ENCODE measurements at regions of chr11 and their contacts with region 1.

Region 1: DNA sequence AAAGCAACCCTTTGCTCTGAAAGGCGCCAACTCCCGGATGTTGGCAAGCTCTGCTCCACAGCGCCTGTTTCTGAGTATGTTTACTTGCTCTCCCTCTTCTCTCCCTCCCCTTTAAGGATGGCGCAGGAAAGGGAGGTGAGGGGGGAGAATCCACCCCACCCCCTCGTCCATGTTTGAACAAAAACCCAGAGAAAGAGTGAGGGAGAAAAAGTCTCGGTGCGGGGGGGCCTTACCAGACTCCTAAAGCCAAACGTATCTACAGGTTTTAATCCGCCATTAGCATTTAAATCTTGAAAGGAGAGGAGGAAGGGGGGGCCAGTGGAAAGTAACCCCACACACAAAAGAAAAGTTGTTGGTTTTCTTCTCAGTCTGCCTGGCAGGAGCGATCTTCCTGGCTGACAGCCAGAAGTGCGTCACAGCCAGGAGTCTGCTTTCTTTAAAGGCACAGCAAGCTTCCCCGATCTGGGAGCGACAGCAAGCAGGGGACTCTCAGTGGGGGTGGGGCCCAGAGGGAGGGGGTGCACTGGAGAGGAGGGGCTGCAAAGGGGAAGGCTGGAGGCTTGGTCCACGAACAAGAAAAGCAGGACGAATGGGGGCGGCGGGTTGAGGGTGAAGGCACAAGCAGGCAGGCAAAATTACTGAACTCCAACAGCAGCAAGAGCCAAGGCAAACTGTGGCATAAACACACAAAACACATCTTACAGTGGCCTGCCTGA is 39.5 kb downstream of the NUMA1 start:
- DNase-seq: peak; percentile 97
- H3K4me3 ChIP-seq: peak overlapping the region; percentile 13 to 51 (median 39)
- H3K27ac ChIP-seq: peak overlapping the region; percentile 92 to 100 (median 95)
- H3K4me1 ChIP-seq: peaks cover 48 to 55% of the 10 kb centered on the region in 2 donors
- H3K27me3 ChIP-seq: no peaks in the 10 kb centered on the region
- CTCF ChIP-seq: no peak
- POLR2A ChIP-seq: peak; percentile 23 to 64

Region 2: DNA sequence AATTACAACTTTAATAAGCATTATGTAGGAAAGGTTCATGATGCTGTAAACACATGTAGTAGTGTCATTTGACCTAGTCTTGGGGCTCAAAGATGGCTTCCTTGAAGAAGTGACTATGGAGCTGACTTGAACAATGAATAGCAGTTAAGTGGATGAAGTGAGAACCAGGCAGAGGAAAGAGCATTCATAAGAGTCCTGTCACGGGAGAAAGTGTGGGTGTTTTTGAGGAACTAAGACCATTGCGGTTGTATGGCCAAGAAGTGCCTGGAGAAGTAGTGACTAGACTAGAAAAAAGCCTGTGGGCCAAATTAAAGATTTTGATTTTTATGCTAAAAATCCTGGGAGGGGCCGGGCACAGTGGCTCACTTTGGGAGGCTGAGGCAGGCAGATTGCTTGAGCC is 49.4 kb before region 1 on chr11:
- intact Hi-C with region 1: no loop called
- DNase-seq: no peak
- H3K4me3 ChIP-seq: no peak overlapping the region
- H3K27ac ChIP-seq: no peak overlapping the region
- H3K4me1 ChIP-seq: peaks cover 10 to 14% of the 10 kb centered on the region in 2 donors
- H3K27me3 ChIP-seq: no peaks in the 10 kb centered on the region
- CTCF ChIP-seq: no peak
- POLR2A ChIP-seq: no peak

Region 3: GRCh38 chr11:72079827-72080255 is 39.0 kb after region 1 on chr11:
- intact Hi-C with region 1: loop called (anchors 2 kb)
- DNase-seq: peak in 1 of 2 donors; percentile 11
- H3K4me3 ChIP-seq: peak overlapping the region; percentile 52 to 79 (median 59)
- H3K27ac ChIP-seq: peak overlapping the region; percentile 70 to 90 (median 81)
- H3K4me1 ChIP-seq: peaks cover 7 to 12% of the 10 kb centered on the region in 2 donors
- H3K27me3 ChIP-seq: no peaks in the 10 kb centered on the region
- CTCF ChIP-seq: no peak
- POLR2A ChIP-seq: no peak

Measured in thyroid gland (tissue), 4 donors.